ENCODE measurements at regions of chr7 and their contacts with region 1.

Region 1: GRCh38 chr7:1123715-1124114 is 35.8 kb downstream of the GPER1 start:
- DNase-seq: peak; percentile 81 to 89
- H3K4me3 ChIP-seq: no peak overlapping the region
- H3K27ac ChIP-seq: peak overlapping the region; percentile 58 to 87 (median 81)
- H3K4me1 ChIP-seq: peaks cover 31 to 44% of the 10 kb centered on the region in 2 donors
- H3K27me3 ChIP-seq: no peaks in the 10 kb centered on the region
- CTCF ChIP-seq: peak; percentile 33 to 80 (median 71)
- POLR2A ChIP-seq: peak in 1 of 2 donors; percentile 12

Region 2: GRCh38 chr7:859359-860030 is 264.2 kb before region 1 on chr7:
- intact Hi-C with region 1: no loop called
- DNase-seq: no peak
- H3K4me3 ChIP-seq: no peak overlapping the region
- H3K27ac ChIP-seq: no peak overlapping the region
- H3K4me1 ChIP-seq: no peaks in the 10 kb centered on the region
- H3K27me3 ChIP-seq: no peaks in the 10 kb centered on the region
- CTCF ChIP-seq: no peak
- POLR2A ChIP-seq: no peak

Region 3: DNA sequence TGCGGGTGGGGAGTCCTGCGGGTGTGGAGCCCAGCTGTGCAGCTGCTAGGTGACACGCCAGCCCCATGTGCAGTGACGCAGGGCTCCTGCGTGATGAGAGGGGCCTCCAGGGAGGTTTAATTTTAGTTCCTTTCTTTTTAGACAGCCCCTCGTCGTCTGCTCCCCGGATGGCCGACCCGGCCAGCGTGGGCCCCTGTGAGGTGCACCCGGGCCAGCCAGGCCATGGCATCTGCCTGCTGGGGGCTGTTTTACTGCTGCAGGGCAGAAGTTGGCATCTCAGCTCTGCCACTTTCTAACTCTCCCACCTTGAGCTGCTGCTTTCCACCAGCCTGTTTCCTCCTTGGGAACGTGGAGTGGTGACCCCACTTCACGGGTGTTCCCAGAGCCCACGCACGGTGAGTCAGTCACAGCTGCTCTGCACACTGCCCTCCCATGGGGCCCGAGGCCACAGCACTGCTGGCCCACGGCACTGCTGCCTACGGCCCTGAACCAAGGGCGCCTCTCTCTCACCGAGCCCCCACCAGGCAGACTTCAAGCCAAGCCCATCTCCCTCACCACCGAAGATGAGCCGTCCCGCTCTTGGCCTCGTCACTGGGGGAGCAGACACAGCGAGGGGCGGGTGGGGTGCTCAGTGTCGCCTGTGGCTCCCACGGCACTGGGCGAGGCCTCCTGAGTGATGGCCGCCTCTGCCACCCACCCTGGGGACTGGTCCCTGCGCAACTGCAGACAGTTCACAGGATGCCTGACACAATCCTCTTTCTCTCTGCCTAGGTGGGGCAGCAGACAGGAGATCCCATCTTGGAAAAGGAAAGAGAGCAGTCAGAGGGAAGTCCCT is 119.5 kb before region 1 on chr7:
- intact Hi-C with region 1: no loop called
- DNase-seq: no peak
- H3K4me3 ChIP-seq: no peak overlapping the region
- H3K27ac ChIP-seq: no peak overlapping the region
- H3K4me1 ChIP-seq: no peaks in the 10 kb centered on the region
- H3K27me3 ChIP-seq: no peaks in the 10 kb centered on the region
- CTCF ChIP-seq: no peak
- POLR2A ChIP-seq: no peak

Region 4: DNA sequence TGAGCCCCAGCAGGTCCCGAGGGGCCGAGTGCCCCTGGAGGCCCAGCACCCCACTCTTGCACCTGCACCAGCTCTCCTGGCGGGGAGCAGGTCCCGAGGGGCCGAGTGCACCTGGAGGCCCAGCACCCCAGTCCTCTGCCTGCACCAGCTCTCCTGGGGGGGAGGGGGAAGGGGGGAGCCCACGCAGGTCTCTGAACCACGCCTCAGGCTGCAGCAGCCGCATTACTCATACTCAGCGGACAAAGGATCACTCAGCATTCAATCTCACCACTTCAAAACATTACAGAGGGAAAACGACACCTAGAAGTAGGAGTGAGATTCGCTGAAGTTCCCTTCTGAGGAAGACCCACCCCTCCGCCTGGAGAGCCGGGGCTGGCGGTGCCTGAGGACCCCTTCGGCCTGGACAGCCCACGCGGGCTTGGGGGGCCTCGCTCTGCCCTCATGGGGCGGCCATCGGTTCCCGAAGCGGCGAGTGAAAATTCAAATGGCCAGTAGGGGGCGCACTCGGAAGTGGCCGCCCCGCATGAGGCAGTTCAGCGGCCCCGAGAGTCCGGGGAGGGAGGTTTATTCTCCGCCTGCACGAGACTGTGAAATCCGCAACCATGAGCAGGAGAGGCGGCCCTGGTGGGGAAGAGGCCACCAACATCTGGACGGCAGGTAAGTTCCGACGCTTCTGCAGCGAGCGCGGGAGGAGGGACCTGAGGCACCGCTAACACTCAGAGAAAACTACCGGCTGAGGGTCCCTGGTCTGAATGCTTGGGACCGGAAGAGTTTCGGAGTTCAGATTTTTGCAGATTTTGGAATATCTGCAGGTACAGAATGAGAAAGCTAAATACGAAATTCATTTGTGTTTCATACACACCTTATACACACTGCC is 36.9 kb before region 1 on chr7:
- intact Hi-C with region 1: loop called (anchors 5 kb)
- DNase-seq: peak; percentile 68 to 77
- H3K4me3 ChIP-seq: peak overlapping the region in 2 of 3 donors; percentile 1 to 24
- H3K27ac ChIP-seq: peak overlapping the region; percentile 16 to 79 (median 65)
- H3K4me1 ChIP-seq: peaks cover 28% of the 10 kb centered on the region in 2 donors
- H3K27me3 ChIP-seq: no peaks in the 10 kb centered on the region
- CTCF ChIP-seq: peak; percentile 75 to 96 (median 86)
- POLR2A ChIP-seq: no peak